A673 (cell line): ENCODE measurements at regions of chr11 and their contacts with region 1.

Region 1: DNA sequence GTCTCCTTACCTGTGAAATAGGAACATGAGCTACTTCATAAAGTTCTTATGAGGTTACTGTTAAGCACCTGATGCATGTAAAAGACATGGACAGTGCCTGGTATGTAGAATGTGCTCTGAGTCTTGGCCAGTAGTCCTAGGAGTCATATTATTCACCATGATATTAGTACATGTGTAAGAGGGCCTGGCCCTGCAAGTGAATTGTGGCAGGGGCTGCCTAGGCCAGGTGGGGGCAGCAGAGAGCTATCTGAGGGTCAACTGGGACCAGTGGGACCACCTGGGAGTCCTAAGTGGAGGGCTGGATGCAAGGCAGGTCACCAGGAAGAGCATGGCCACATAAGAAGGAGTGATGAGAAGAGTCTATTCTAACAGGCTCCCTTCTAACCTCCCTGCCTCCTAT is 529.5 kb downstream of the SOX6 start:
- DNase-seq: peak; percentile 83
- H3K4me3 ChIP-seq: no peak overlapping the region
- H3K27ac ChIP-seq: no peak overlapping the region
- H3K4me1 ChIP-seq: peaks cover 20% of the 10 kb centered on the region
- H3K27me3 ChIP-seq: no peaks in the 10 kb centered on the region
- CTCF ChIP-seq: peak; percentile 91

Region 2: DNA sequence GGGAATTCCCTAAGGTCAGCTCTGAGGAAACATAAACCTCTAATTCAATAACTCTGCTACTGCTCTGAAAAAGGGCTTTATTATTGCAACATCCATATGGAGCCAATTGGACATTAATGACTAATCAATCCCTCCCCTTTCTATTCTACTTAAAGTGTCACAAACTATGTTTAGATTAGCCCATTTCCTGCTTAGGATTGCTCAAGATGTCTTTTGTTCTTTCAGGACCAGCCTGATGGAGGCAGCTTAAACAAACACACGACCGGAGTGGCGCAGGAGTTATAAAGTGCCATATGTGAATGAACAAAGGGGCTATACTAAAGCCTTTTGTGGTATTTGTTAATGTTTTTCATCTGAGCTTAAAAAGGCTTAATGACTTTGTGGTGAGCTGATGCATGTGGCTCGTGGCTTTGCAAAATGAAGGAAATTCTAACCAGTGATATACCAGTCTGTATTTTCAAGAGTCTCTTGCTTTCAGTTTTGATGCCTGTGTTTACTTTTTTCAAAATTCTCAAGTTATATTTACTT is 175.1 kb after region 1 on chr11:
- CTCF ChIA-PET with region 1: no interaction called
- POLR2A ChIA-PET with region 1: no interaction called
- intact Hi-C with region 1: loop called (anchors 5 kb)
- DNase-seq: peak; percentile 98
- H3K4me3 ChIP-seq: no peak overlapping the region
- H3K27ac ChIP-seq: peak overlapping the region; percentile 59
- H3K4me1 ChIP-seq: peaks cover 37% of the 10 kb centered on the region
- H3K27me3 ChIP-seq: peaks cover 3% of the 10 kb centered on the region
- CTCF ChIP-seq: no peak

Region 3: DNA sequence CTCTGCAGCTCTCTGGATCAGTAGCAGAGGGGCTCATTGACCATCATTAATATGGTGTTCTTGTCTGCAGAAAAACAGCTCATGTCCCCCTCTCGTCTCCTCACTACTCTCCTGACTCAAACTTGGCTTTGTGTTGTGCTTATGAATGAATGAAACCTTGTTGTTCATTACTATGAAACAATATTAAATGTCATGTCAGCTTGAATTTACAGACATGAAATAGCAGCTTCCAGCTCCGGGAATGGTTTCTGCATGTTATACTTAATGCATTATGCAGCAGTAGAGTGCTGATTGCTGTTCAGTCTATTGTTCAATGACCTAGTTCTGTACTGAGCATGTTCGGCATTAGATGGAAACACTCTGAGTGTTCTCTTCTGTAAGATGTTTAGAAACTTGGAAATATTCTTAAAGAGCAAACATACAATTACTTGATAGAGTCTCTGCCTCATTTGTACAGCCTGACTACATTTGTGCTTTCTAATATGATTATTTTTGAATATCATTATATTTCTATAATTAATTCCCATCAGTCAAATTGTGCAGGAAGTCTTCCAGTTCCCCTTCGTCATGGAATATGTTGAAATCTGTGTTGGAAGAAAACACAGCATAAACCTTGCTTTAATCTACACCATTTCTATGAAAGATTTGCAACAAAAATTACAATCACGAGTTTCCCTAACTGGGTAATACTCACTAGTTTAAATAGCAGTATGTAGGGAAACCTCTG is 189.1 kb after region 1 on chr11:
- CTCF ChIA-PET with region 1: no interaction called
- POLR2A ChIA-PET with region 1: no interaction called
- intact Hi-C with region 1: loop called (anchors 2 kb)
- DNase-seq: no peak
- H3K4me3 ChIP-seq: no peak overlapping the region
- H3K27ac ChIP-seq: no peak overlapping the region
- H3K4me1 ChIP-seq: peaks cover 47% of the 10 kb centered on the region
- H3K27me3 ChIP-seq: no peaks in the 10 kb centered on the region
- CTCF ChIP-seq: no peak